Ascending aorta (tissue), 2 donors: ENCODE measurements at regions of chr18 and their contacts with region 1.

Region 1: DNA sequence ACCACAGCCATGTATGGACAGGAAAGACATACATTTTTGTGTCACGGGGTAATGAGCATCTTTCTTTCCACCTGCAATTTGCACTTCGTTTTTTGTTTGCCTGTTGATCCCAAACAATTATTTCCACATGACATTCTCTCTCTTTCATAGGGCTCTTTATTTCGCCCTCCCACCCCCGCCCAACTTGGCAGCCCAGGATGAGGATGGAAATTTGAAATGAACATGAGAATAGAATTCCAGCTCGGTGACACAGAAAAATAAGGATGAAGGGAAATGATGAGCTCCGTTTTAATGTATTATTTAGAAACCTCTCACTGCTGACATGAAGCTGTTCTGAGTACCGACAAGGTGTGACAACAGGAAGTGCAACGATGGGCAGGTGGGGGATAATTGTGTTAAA is 443.3 kb downstream of the SOCS6 start:
- DNase-seq: no peak
- H3K4me3 ChIP-seq: no peak overlapping the region
- H3K27ac ChIP-seq: no peak overlapping the region
- H3K4me1 ChIP-seq: no peaks in the 10 kb centered on the region
- H3K27me3 ChIP-seq: no peaks in the 10 kb centered on the region
- CTCF ChIP-seq: no peak

Region 2: GRCh38 chr18:69978732-69979715 is 753.2 kb before region 1 on chr18:
- intact Hi-C with region 1: no loop called
- DNase-seq: no peak
- H3K4me3 ChIP-seq: no peak overlapping the region
- H3K27ac ChIP-seq: no peak overlapping the region
- H3K4me1 ChIP-seq: no peaks in the 10 kb centered on the region
- H3K27me3 ChIP-seq: no peaks in the 10 kb centered on the region
- CTCF ChIP-seq: no peak

Region 3: GRCh38 chr18:70781860-70782453 is 49.8 kb after region 1 on chr18:
- intact Hi-C with region 1: loop called (anchors 2 kb)
- DNase-seq: no peak
- H3K4me3 ChIP-seq: no peak overlapping the region
- H3K27ac ChIP-seq: no peak overlapping the region
- H3K4me1 ChIP-seq: no peaks in the 10 kb centered on the region
- H3K27me3 ChIP-seq: no peaks in the 10 kb centered on the region
- CTCF ChIP-seq: peak in 2 of 3 experiments; percentile 36 to 59